ENCODE measurements at regions of chr17 and their contacts with region 1.

Region 1: GRCh38 chr17:54727624-54728023 is 173.0 kb upstream of the TOM1L1 start:
- DNase-seq: no peak
- ATAC-seq: no peak
- H3K4me3 ChIP-seq: no peak overlapping the region
- H3K27ac ChIP-seq: no peak overlapping the region
- H3K4me1 ChIP-seq: no peaks in the 10 kb centered on the region
- H3K27me3 ChIP-seq: no peaks in the 10 kb centered on the region
- CTCF ChIP-seq: no peak
- POLR2A ChIP-seq: no peak

Region 2: GRCh38 chr17:54694287-54694887 is 33.2 kb before region 1 on chr17:
- intact Hi-C with region 1: no loop called
- DNase-seq: no peak
- ATAC-seq: no peak
- H3K4me3 ChIP-seq: no peak overlapping the region
- H3K27ac ChIP-seq: no peak overlapping the region
- H3K4me1 ChIP-seq: no peaks in the 10 kb centered on the region
- H3K27me3 ChIP-seq: no peaks in the 10 kb centered on the region
- CTCF ChIP-seq: no peak
- POLR2A ChIP-seq: no peak

Region 3: GRCh38 chr17:54785643-54786268 is 58.1 kb after region 1 on chr17:
- intact Hi-C with region 1: loop called in 1 of 10 experiments (anchors 10 kb)
- DNase-seq: no peak
- ATAC-seq: no peak
- H3K4me3 ChIP-seq: no peak overlapping the region
- H3K27ac ChIP-seq: no peak overlapping the region
- H3K4me1 ChIP-seq: no peaks in the 10 kb centered on the region
- H3K27me3 ChIP-seq: no peaks in the 10 kb centered on the region
- CTCF ChIP-seq: no peak
- POLR2A ChIP-seq: no peak